Naive thymus-derived CD4-positive, alpha-beta T cell (primary cell): ENCODE measurements at regions of chr9 and their contacts with region 1.

Region 1: DNA sequence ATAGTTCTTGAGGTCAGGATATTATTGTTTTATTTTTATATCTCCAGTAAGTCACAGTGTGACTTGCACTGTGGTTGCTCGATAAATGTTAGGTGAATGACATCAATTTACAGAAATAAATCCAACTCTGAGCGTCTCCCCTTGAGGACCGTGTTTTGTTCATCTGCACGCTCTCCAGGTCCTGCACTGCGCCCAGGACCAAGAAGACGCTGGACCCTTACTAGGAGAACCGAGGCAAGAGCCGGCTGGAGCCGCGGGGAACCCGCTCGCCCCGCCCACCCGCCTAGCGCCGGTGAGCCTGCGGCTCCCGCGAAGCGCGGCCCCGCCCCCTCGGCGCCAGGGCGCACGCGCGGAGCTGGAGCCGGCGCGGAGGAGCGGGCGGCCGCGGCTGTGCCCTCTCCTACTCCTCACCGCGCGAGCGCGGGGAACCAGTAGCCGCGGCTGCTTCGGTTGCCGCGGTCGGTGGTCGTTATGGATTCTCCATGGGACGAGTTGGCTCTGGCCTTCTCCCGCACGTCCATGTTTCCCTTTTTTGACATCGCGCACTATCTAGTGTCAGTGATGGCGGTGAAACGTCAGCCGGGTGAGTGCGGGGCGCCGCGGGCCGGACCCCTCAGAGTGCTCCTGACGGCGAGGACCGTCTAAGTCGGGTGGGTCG is at the start of gene TMEM38B:
- DNase-seq: peak; percentile 72 to 91 (median 85)
- ATAC-seq: peak; percentile 92
- H3K4me3 ChIP-seq: peak within 1 kb of the TSS; percentile 79
- H3K4me3 Mint-ChIP-seq: peak within 1 kb of the TSS; percentile 80 to 97 (median 90)
- H3K27ac ChIP-seq: peak within 1 kb of the TSS; percentile 64
- H3K27ac Mint-ChIP-seq: peak within 1 kb of the TSS; percentile 44 to 88 (median 70)
- H3K4me1 ChIP-seq: peaks cover 7 to 10% of the 10 kb centered on the region in 2 donors
- H3K4me1 Mint-ChIP-seq: peaks cover 13 to 49% (median 40%) of the 10 kb centered on the region in 7 donors
- H3K27me3 ChIP-seq: peaks cover 0 to 3% of the 10 kb centered on the region in 2 donors
- H3K27me3 Mint-ChIP-seq: peaks cover 13 to 31% (median 26%) of the 10 kb centered on the region in 5 donors
- total RNA-seq, gene TMEM38B: 5.8 to 21.0 (median 15.2) TPM

Region 2: GRCh38 chr9:104093647-104094533 is 1600.4 kb before region 1 on chr9 and contains the start of gene SMC2:
- CTCF ChIA-PET with region 1: no interaction called
- POLR2A ChIA-PET with region 1: no interaction called
- intact Hi-C with region 1: loop called (anchors 2 to 5 kb)
- DNase-seq: peak; percentile 89 to 97 (median 95)
- ATAC-seq: peak; percentile 98
- H3K4me3 ChIP-seq: peak within 1 kb of the TSS; percentile 87
- H3K4me3 Mint-ChIP-seq: peak within 1 kb of the TSS; percentile 95 to 100 (median 100)
- H3K27ac ChIP-seq: peak within 1 kb of the TSS; percentile 94
- H3K27ac Mint-ChIP-seq: peak within 1 kb of the TSS; percentile 94 to 100 (median 99)
- H3K4me1 ChIP-seq: peaks cover 11 to 17% of the 10 kb centered on the region in 2 donors
- H3K4me1 Mint-ChIP-seq: peaks cover 17 to 58% (median 49%) of the 10 kb centered on the region in 7 donors
- H3K27me3 ChIP-seq: no peaks in the 10 kb centered on the region
- H3K27me3 Mint-ChIP-seq: peaks cover 0 to 3% (median 0%) of the 10 kb centered on the region in 5 donors
- total RNA-seq, gene SMC2: 4.4 to 53.6 (median 11.3) TPM

Region 3: GRCh38 chr9:104991144-104991953 is 703.0 kb before region 1 on chr9:
- CTCF ChIA-PET with region 1: no interaction called
- POLR2A ChIA-PET with region 1: no interaction called
- intact Hi-C with region 1: loop called in 1 of 2 experiments (anchors 5 kb)
- DNase-seq: peak; percentile 79 to 92 (median 86)
- ATAC-seq: peak; percentile 88
- H3K4me3 ChIP-seq: peak overlapping the region; percentile 80
- H3K4me3 Mint-ChIP-seq: peak overlapping the region; percentile 89 to 94 (median 92)
- H3K27ac ChIP-seq: peak overlapping the region; percentile 92
- H3K27ac Mint-ChIP-seq: peak overlapping the region; percentile 68 to 98 (median 92)
- H3K4me1 ChIP-seq: peaks cover 15 to 32% of the 10 kb centered on the region in 2 donors
- H3K4me1 Mint-ChIP-seq: peaks cover 26 to 45% (median 39%) of the 10 kb centered on the region in 7 donors
- H3K27me3 ChIP-seq: no peaks in the 10 kb centered on the region
- H3K27me3 Mint-ChIP-seq: peaks cover 0 to 63% (median 0%) of the 10 kb centered on the region in 5 donors

Region 4: GRCh38 chr9:105447814-105448812 is 246.2 kb before region 1 on chr9 and contains the start of gene FSD1L:
- CTCF ChIA-PET with region 1: no interaction called
- POLR2A ChIA-PET with region 1: no interaction called
- intact Hi-C with region 1: loop called (anchors 1 to 5 kb)
- DNase-seq: peak; percentile 38 to 86 (median 67)
- ATAC-seq: peak; percentile 94
- H3K4me3 ChIP-seq: peak within 1 kb of the TSS; percentile 81
- H3K4me3 Mint-ChIP-seq: peak within 1 kb of the TSS; percentile 70 to 89 (median 84)
- H3K27ac ChIP-seq: peak within 1 kb of the TSS; percentile 43
- H3K27ac Mint-ChIP-seq: peak within 1 kb of the TSS in 4 of 9 donors; percentile 34 to 80 (median 46)
- H3K4me1 ChIP-seq: peaks cover 3 to 5% of the 10 kb centered on the region in 2 donors
- H3K4me1 Mint-ChIP-seq: peaks cover 0 to 35% (median 9%) of the 10 kb centered on the region in 7 donors
- H3K27me3 ChIP-seq: no peaks in the 10 kb centered on the region
- H3K27me3 Mint-ChIP-seq: peaks cover 0 to 8% (median 3%) of the 10 kb centered on the region in 5 donors
- total RNA-seq, gene FSD1L: 0.38 to 5.8 (median 0.61) TPM

Region 5: DNA sequence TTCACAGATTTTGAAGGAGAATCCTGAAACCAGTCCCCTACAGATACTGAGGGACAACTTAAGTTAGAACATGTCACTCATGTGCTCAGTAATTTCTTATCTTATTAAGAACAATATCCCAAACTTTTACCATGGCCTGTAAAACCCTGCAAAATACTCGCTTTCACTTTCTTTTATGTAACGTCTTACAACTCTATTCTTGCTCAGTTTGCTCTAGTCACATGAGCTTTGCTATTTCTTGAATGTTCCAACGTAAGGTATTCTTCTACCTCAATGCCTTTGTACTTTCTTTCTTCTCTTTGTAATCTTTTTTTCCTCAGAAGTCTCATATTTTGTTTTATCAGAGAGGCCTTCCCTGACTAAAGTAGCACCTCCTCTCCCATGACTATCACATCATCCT is 14.1 kb after region 1 on chr9:
- CTCF ChIA-PET with region 1: no interaction called
- POLR2A ChIA-PET with region 1: interaction called, 4 read pairs
- intact Hi-C with region 1: loop called in 1 of 2 experiments (anchors 1 kb)
- DNase-seq: peak in 1 of 9 donors; percentile 34
- ATAC-seq: no peak
- H3K4me3 ChIP-seq: peak overlapping the region; percentile 18
- H3K4me3 Mint-ChIP-seq: peak overlapping the region; percentile 13 to 83 (median 72)
- H3K27ac ChIP-seq: peak overlapping the region; percentile 17
- H3K27ac Mint-ChIP-seq: peak overlapping the region; percentile 30 to 93 (median 74)
- H3K4me1 ChIP-seq: no peaks in the 10 kb centered on the region
- H3K4me1 Mint-ChIP-seq: peaks cover 0 to 19% (median 12%) of the 10 kb centered on the region in 7 donors
- H3K27me3 ChIP-seq: no peaks in the 10 kb centered on the region
- H3K27me3 Mint-ChIP-seq: no peaks in the 10 kb centered on the region

Region 6: GRCh38 chr9:105881654-105882349 is 187.5 kb after region 1 on chr9:
- CTCF ChIA-PET with region 1: no interaction called
- POLR2A ChIA-PET with region 1: no interaction called
- intact Hi-C with region 1: loop called in 1 of 2 experiments (anchors 5 kb)
- DNase-seq: peak; percentile 16 to 64 (median 52)
- ATAC-seq: peak; percentile 65
- H3K4me3 ChIP-seq: no peak overlapping the region
- H3K4me3 Mint-ChIP-seq: no peak overlapping the region
- H3K27ac ChIP-seq: no peak overlapping the region
- H3K27ac Mint-ChIP-seq: no peak overlapping the region
- H3K4me1 ChIP-seq: no peaks in the 10 kb centered on the region
- H3K4me1 Mint-ChIP-seq: peaks cover 0 to 26% (median 4%) of the 10 kb centered on the region in 7 donors
- H3K27me3 ChIP-seq: no peaks in the 10 kb centered on the region
- H3K27me3 Mint-ChIP-seq: peaks cover 4 to 39% (median 10%) of the 10 kb centered on the region in 5 donors

Region 7: DNA sequence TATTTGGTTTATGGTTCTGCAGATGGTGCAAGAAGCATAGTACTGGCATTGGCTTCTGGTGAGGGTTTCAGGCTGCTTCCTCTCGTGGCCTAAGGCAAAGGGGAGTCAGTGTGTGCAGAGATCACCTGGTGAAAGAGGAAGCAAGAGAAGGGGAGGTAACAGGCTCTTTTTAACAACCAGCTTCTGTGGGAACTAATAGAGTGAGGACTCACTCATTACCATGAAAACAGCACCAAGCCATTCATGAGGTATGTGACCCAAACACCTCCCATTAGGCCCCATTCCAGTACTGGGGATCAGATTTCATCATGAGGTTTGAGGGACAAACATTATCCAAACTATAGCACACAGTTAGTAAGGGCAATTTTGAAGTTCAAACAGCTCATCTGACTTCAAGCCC is 263.5 kb after region 1 on chr9:
- CTCF ChIA-PET with region 1: no interaction called
- POLR2A ChIA-PET with region 1: no interaction called
- intact Hi-C with region 1: no loop called
- DNase-seq: no peak
- ATAC-seq: no peak
- H3K4me3 ChIP-seq: no peak overlapping the region
- H3K4me3 Mint-ChIP-seq: no peak overlapping the region
- H3K27ac ChIP-seq: no peak overlapping the region
- H3K27ac Mint-ChIP-seq: no peak overlapping the region
- H3K4me1 ChIP-seq: no peaks in the 10 kb centered on the region
- H3K4me1 Mint-ChIP-seq: no peaks in the 10 kb centered on the region
- H3K27me3 ChIP-seq: no peaks in the 10 kb centered on the region
- H3K27me3 Mint-ChIP-seq: peaks cover 0 to 11% (median 0%) of the 10 kb centered on the region in 5 donors